ENCODE measurements at regions of chr1 and their contacts with region 1.

Region 1: DNA sequence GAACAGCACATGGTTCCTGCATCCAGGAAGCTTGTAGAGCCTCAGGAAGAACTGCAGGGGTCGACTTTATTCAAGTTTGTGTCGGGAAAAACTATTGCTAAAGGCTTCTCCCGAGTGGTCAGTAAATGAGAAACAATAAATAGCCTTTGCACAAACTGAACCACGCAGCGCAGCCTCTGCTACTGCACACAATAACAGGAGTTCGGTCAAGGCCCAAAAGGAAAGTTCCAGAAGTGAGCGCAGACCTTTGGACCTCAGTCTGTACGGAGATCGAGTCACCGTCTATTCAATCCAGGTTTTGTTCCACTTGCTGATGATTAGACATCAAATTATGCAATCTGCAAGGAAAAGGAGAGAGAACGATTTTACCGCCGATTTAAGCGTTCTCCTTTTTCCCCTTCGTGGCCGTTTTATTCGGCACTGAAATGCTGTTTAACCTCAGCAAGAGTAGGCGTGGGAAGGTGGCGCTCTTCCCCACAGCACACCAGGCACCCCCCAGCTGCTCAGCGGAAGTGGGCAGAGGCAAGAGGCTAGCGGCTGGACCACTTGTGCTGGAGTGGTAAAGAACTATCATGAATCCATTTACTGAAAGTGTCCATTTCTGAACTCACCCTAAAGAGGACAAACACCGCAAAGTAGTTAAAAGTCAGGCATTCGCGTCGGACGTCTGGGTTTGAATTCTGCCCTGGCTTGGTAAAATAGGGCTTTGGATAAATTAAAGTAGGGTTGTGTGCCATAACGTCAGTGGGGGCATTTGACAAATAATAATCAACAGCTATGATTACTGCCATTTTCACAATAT is 6.1 kb upstream of the LHX8 start:
- DNase-seq: no peak

Region 2: GRCh38 chr1:75115654-75116053 is 12.5 kb before region 1 on chr1:
- intact Hi-C with region 1: loop called in 1 of 2 experiments (anchors 1 kb)
- DNase-seq: no peak

Region 3: GRCh38 chr1:75265792-75266191 is 137.7 kb after region 1 on chr1:
- intact Hi-C with region 1: no loop called
- DNase-seq: no peak

Region 4: DNA sequence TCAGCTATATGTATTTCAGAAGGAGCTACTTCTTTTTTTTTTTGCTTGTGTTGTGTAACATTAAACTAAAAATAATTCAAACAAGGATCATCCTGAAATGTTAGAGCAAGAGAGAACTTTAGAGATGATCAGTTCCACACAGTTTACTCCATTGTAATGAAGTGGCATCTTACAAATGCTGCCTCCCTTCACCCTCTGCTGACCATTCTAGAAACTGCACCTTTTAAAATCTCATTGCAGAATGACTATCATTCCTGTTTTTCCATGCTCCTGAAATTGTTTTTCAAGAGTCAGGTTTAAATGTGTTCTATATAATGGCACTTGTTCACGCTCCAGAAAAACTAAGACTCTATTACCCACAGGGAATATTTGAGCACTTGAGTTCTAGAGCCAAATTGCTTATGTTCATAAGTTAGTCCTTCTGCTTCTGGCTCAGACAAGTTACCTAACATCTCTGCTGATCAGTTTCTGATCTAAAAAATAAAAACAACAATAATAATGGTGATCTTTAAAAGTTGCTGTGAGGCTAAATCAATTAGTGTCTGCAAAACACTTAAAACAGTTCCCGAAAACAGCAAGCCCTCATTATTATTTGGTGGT is 504.3 kb after region 1 on chr1:
- intact Hi-C with region 1: no loop called
- DNase-seq: no peak

Measured in posterior vena cava (tissue), 2 donors.